PC-9 (cell line): ENCODE measurements at regions of chr13 and their contacts with region 1.

Region 1: GRCh38 chr13:32019612-32020233 is 11.9 kb upstream of the FRY start:
- DNase-seq: no peak
- H3K4me3 ChIP-seq: no peak overlapping the region
- H3K27ac ChIP-seq: no peak overlapping the region
- H3K4me1 ChIP-seq: no peaks in the 10 kb centered on the region
- H3K27me3 ChIP-seq: no peaks in the 10 kb centered on the region
- CTCF ChIP-seq: peak; percentile 62

Region 2: DNA sequence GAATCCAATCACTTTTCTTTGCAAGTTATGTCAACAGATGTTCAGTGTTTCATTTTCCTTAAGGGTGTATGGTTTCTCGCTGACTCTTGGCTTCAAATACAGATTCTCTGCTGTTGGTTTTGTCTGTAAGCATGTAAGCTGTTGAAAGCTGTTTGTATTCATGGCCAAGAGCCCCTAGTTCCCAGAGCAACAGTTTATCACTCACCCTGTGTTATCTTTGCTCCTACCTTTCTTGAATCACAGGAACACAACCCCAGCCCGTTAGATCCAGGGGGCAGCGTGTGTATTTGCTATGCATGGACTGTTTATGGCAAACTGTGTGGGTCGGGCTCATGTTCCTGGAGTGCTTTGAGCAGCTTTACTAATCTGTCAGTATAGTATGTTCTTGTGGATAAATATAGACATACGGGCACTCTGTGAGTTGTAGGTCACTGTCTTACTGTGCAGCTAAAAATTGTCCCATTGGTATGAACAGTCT is 40.7 kb after region 1 on chr13:
- CTCF ChIA-PET with region 1: no interaction called
- POLR2A ChIA-PET with region 1: no interaction called
- intact Hi-C with region 1: no loop called
- DNase-seq: no peak
- H3K4me3 ChIP-seq: no peak overlapping the region
- H3K27ac ChIP-seq: no peak overlapping the region
- H3K4me1 ChIP-seq: no peaks in the 10 kb centered on the region
- H3K27me3 ChIP-seq: no peaks in the 10 kb centered on the region
- CTCF ChIP-seq: no peak

Region 3: GRCh38 chr13:32468502-32469142 is 448.9 kb after region 1 on chr13:
- CTCF ChIA-PET with region 1: no interaction called
- POLR2A ChIA-PET with region 1: interaction called, 10 read pairs
- intact Hi-C with region 1: no loop called
- DNase-seq: no peak
- H3K4me3 ChIP-seq: no peak overlapping the region
- H3K27ac ChIP-seq: no peak overlapping the region
- H3K4me1 ChIP-seq: no peaks in the 10 kb centered on the region
- H3K27me3 ChIP-seq: no peaks in the 10 kb centered on the region
- CTCF ChIP-seq: no peak

Region 4: GRCh38 chr13:32581177-32581786 is 561.6 kb after region 1 on chr13:
- CTCF ChIA-PET with region 1: no interaction called
- POLR2A ChIA-PET with region 1: no interaction called
- intact Hi-C with region 1: loop called (anchors 5 kb)
- DNase-seq: no peak
- H3K4me3 ChIP-seq: no peak overlapping the region
- H3K27ac ChIP-seq: no peak overlapping the region
- H3K4me1 ChIP-seq: peaks cover 6% of the 10 kb centered on the region; the same call in 1 of the 2 replicates
- H3K27me3 ChIP-seq: no peaks in the 10 kb centered on the region
- CTCF ChIP-seq: peak; percentile 67

Region 5: GRCh38 chr13:33249066-33249465 is 1229.3 kb after region 1 on chr13:
- CTCF ChIA-PET with region 1: no interaction called
- POLR2A ChIA-PET with region 1: no interaction called
- intact Hi-C with region 1: no loop called
- DNase-seq: no peak
- H3K4me3 ChIP-seq: no peak overlapping the region
- H3K27ac ChIP-seq: peak overlapping the region; percentile 33
- H3K4me1 ChIP-seq: peaks cover 32% of the 10 kb centered on the region
- H3K27me3 ChIP-seq: no peaks in the 10 kb centered on the region
- CTCF ChIP-seq: no peak